Activated CD4-positive, alpha-beta T cell treated with anti-CD3 and anti-CD28 coated beads, Interleukin-2, amount 10 ng/mL, durations not matched to agents 24 days and 14 days (primary cell): ENCODE measurements at regions of chr12 and their contacts with region 1.

Region 1: DNA sequence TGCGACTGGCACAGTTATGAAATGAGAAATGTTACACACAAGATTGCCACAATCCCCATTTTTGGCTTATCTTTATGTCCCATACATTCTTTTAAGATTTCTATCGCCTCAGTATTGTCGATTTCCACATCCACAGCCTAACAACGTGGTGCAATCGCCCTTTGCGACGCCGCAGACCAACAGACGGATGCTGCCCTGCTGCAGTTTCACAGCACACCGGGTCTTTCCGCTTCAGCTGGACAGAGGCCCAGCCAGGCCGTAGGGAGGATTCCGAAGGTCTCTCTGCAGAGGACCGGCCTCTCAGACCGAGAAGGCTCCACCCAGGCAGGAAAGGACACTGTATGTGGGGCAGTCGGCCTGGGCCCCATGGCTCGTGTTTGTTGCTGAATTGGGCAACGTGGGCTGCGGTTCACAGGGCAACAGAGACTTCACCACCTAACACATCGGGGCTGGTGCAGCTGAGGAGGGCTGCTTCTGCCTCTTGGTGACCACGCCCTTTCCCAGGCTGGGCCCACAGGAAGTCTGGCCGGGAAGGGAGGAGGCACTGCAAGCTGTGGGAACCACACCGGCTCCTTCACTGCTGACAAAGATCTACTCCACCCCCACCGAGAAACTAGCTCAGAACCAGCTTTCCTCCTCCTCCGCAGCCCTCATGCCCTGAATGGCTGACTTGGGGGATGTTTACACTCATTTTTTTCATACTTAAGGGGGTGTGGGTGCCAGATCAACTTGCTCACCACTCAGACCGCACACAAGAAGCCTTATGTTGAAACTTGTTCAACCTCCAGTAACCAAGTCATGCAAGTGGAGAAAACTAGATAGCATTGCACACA is 32.9 kb upstream of the MDM1 start:
- DNase-seq: peak; percentile 95
- H3K4me3 Mint-ChIP-seq: peak overlapping the region; percentile 83
- H3K27ac Mint-ChIP-seq: peak overlapping the region; percentile 95
- H3K4me1 Mint-ChIP-seq: peaks cover 56% of the 10 kb centered on the region
- H3K27me3 Mint-ChIP-seq: no peaks in the 10 kb centered on the region

Region 2: GRCh38 chr12:68303850-68304249 is 61.3 kb before region 1 on chr12:
- intact Hi-C with region 1: no loop called
- DNase-seq: no peak
- H3K4me3 Mint-ChIP-seq: no peak overlapping the region
- H3K27ac Mint-ChIP-seq: no peak overlapping the region
- H3K4me1 Mint-ChIP-seq: peaks cover 26% of the 10 kb centered on the region
- H3K27me3 Mint-ChIP-seq: no peaks in the 10 kb centered on the region

Region 3: GRCh38 chr12:68641138-68641537 is 276.0 kb after region 1 on chr12:
- intact Hi-C with region 1: loop called (anchors 2 kb)
- DNase-seq: peak; percentile 86
- H3K4me3 Mint-ChIP-seq: peak overlapping the region; percentile 64
- H3K27ac Mint-ChIP-seq: peak overlapping the region; percentile 60
- H3K4me1 Mint-ChIP-seq: peaks cover 48% of the 10 kb centered on the region
- H3K27me3 Mint-ChIP-seq: no peaks in the 10 kb centered on the region